Activated CD4-positive, alpha-beta T cell treated with anti-CD3 and anti-CD28 coated beads, Interleukin-2, amount 10 ng/mL, durations not matched to agents 24 days and 14 days (primary cell): ENCODE measurements at regions of chr11 and their contacts with region 1.

Region 1: DNA sequence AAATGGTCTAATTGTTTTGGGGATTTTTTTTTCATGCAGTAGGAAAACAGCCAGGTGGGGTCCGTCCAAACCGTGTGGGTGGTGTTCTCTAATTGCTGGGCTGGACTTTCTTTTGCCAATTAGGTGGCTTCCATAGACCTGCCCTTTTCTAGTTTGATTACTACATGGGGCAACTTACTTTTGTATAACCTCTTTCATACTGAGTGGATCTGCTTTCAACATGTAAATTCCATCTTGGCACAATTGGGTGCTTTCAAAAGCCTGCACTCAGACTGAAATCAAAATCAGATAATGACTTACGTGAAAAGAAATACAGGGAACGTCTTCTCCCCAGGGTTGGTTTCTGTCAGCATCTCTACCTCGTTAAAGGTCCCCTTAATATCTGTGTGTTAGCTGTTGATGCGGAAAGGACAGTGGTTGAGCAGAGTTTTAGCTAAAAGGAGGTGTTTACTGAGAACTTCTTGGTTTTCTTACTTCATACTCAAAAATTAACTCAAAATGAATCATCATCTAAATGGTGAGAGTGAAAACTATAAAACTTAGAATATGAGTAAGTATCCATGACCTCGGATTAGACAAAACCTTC is 72.1 kb downstream of the BARX2 start:
- DNase-seq: no peak
- H3K4me3 Mint-ChIP-seq: no peak overlapping the region
- H3K27ac Mint-ChIP-seq: peak overlapping the region; percentile 87
- H3K4me1 Mint-ChIP-seq: peaks cover 13% of the 10 kb centered on the region
- H3K27me3 Mint-ChIP-seq: peaks cover 2% of the 10 kb centered on the region

Region 2: GRCh38 chr11:129375751-129376657 is 71.7 kb before region 1 on chr11 and contains the start of gene BARX2:
- intact Hi-C with region 1: loop called (anchors 5 kb)
- DNase-seq: peak; percentile 80
- H3K4me3 Mint-ChIP-seq: peak within 1 kb of the TSS; percentile 86
- H3K27ac Mint-ChIP-seq: peak within 1 kb of the TSS; percentile 52
- H3K4me1 Mint-ChIP-seq: peaks cover 26% of the 10 kb centered on the region
- H3K27me3 Mint-ChIP-seq: peaks cover 72% of the 10 kb centered on the region
- total RNA-seq, gene BARX2: 4.1 and 4.7 TPM in 2 replicates

Region 3: GRCh38 chr11:129408865-129409444 is 38.8 kb before region 1 on chr11:
- intact Hi-C with region 1: loop called (anchors 5 kb)
- DNase-seq: no peak
- H3K4me3 Mint-ChIP-seq: no peak overlapping the region
- H3K27ac Mint-ChIP-seq: peak overlapping the region; percentile 49
- H3K4me1 Mint-ChIP-seq: peaks cover 8% of the 10 kb centered on the region
- H3K27me3 Mint-ChIP-seq: no peaks in the 10 kb centered on the region

Region 4: GRCh38 chr11:129418039-129418438 is 29.7 kb before region 1 on chr11:
- intact Hi-C with region 1: loop called (anchors 1 kb)
- DNase-seq: peak; percentile 57
- H3K4me3 Mint-ChIP-seq: no peak overlapping the region
- H3K27ac Mint-ChIP-seq: peak overlapping the region; percentile 35
- H3K4me1 Mint-ChIP-seq: peaks cover 23% of the 10 kb centered on the region
- H3K27me3 Mint-ChIP-seq: no peaks in the 10 kb centered on the region